MCF 10A (cell line): ENCODE measurements at regions of chr12 and their contacts with region 1.

Region 1: GRCh38 chr12:18320036-18320617 is 58.8 kb downstream of the PIK3C2G start:
- DNase-seq: peak; percentile 84
- H3K4me3 Mint-ChIP-seq: peak overlapping the region; percentile 21
- H3K27ac Mint-ChIP-seq: peak overlapping the region; percentile 5
- H3K4me1 Mint-ChIP-seq: peaks cover 14% of the 10 kb centered on the region
- H3K27me3 Mint-ChIP-seq: no peaks in the 10 kb centered on the region
- CTCF ChIP-seq: peak; percentile 44

Region 2: GRCh38 chr12:18139989-18140596 is 180.0 kb before region 1 on chr12:
- CTCF ChIA-PET with region 1: interaction called, 9 read pairs
- POLR2A ChIA-PET with region 1: no interaction called
- intact Hi-C with region 1: loop called (anchors 1 kb)
- DNase-seq: peak; percentile 45
- H3K4me3 Mint-ChIP-seq: no peak overlapping the region
- H3K27ac Mint-ChIP-seq: no peak overlapping the region
- H3K4me1 Mint-ChIP-seq: peaks cover 17% of the 10 kb centered on the region
- H3K27me3 Mint-ChIP-seq: no peaks in the 10 kb centered on the region
- CTCF ChIP-seq: peak; percentile 69

Region 3: GRCh38 chr12:18261253-18261652 is 58.9 kb before region 1 on chr12 and contains the start of gene PIK3C2G:
- CTCF ChIA-PET with region 1: interaction called, 120 read pairs
- POLR2A ChIA-PET with region 1: interaction called, 41 read pairs
- intact Hi-C with region 1: loop called (anchors 1 kb)
- DNase-seq: peak; percentile 43
- H3K4me3 Mint-ChIP-seq: peak within 1 kb of the TSS; percentile 76
- H3K27ac Mint-ChIP-seq: peak within 1 kb of the TSS; percentile 100
- H3K4me1 Mint-ChIP-seq: peaks cover 40% of the 10 kb centered on the region
- H3K27me3 Mint-ChIP-seq: no peaks in the 10 kb centered on the region
- CTCF ChIP-seq: no peak
- total RNA-seq, gene PIK3C2G: 10.6 and 15.0 TPM in 2 replicates

Region 4: GRCh38 chr12:18296201-18296908 is 23.8 kb before region 1 on chr12:
- CTCF ChIA-PET with region 1: interaction called, 7 read pairs
- POLR2A ChIA-PET with region 1: interaction called, 68 read pairs
- intact Hi-C with region 1: no loop called
- DNase-seq: peak; percentile 46
- H3K4me3 Mint-ChIP-seq: peak overlapping the region; percentile 77
- H3K27ac Mint-ChIP-seq: peak overlapping the region; percentile 96
- H3K4me1 Mint-ChIP-seq: peaks cover 9% of the 10 kb centered on the region
- H3K27me3 Mint-ChIP-seq: no peaks in the 10 kb centered on the region
- CTCF ChIP-seq: no peak

Region 5: DNA sequence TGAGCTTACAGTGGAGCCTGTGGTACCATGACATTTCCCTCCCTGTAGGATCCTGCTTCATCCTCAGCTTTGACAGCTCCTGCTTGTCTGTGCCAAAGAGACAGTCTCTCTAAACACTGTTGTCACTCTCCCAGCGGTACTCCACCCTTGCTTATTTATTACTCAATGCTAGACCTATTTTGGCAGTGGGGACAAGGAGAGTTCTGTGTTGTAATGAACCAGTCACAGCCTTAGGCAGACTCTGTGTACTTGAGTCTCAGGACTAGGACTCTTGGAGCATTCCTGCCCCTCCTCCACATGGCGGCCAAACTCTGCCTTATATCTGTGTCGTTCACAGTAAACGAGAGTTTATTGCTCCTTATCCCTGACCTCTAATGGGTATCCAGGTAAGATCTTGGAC is 12.0 kb after region 1 on chr12:
- CTCF ChIA-PET with region 1: interaction called, 31 read pairs
- POLR2A ChIA-PET with region 1: interaction called, 10 read pairs
- intact Hi-C with region 1: no loop called
- DNase-seq: peak; percentile 13
- H3K4me3 Mint-ChIP-seq: no peak overlapping the region
- H3K27ac Mint-ChIP-seq: no peak overlapping the region
- H3K4me1 Mint-ChIP-seq: peaks cover 4% of the 10 kb centered on the region
- H3K27me3 Mint-ChIP-seq: no peaks in the 10 kb centered on the region
- CTCF ChIP-seq: no peak